GM10248 (cell line): ENCODE measurements at regions of chr1 and their contacts with region 1.

Region 1: GRCh38 chr1:47517946-47518345 is 80.1 kb downstream of the FOXD2 start:
- DNase-seq: no peak
- CTCF ChIP-seq: no peak

Region 2: DNA sequence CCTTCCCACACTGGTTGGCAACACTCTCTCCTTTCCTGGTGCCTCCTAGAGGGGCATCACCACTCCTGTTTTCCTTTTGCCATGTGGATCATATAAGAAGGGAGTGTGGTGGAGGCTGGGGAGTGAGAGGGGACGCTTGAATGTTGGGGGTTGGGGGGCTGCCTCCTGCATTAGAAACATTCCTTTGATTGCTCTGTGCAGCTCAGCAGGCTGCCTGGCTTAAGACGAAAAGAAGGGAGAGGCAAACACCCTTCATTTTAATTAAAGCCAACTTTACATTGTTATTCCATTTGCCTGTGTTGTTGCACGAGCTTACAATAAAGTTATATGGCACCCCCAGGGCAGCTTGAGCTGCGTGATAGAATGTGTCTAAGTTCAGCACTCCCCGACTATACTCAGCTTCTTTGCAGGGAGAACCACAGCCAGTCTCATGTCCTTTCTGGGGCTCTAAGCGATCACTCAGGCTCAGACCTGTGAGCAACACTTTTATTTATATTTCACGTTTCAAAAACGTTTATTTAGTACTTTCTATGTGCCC is 22.7 kb before region 1 on chr1:
- CTCF ChIA-PET with region 1: no interaction called
- POLR2A ChIA-PET with region 1: no interaction called
- DNase-seq: no peak
- CTCF ChIP-seq: no peak

Region 3: DNA sequence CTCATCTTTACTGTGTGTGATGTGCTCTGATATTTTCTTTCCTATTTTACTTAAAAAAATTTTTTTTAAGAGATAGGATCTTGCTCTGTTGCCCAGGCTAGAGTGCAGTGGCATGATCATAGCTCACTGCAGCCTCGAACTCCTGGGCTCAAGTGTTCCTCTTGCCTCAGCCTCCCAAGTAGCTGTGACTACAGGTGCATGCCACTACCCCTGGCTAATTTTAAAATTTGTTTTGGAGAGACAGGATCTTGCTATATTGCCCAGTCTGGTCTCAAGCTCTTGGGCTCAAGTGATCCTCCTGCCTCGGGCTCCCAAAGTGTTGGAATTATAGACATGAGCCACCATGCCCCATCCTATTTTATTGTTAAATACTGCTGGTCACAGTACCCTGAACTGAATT is 12.7 kb before region 1 on chr1:
- CTCF ChIA-PET with region 1: interaction called, 10 read pairs
- POLR2A ChIA-PET with region 1: no interaction called
- DNase-seq: no peak
- CTCF ChIP-seq: no peak

Region 4: GRCh38 chr1:47536646-47537118 is 18.7 kb after region 1 on chr1:
- CTCF ChIA-PET with region 1: no interaction called
- POLR2A ChIA-PET with region 1: no interaction called
- DNase-seq: no peak
- CTCF ChIP-seq: no peak